Ascending aorta (tissue), 2 donors: ENCODE measurements at regions of chr22 and their contacts with region 1.

Region 1: DNA sequence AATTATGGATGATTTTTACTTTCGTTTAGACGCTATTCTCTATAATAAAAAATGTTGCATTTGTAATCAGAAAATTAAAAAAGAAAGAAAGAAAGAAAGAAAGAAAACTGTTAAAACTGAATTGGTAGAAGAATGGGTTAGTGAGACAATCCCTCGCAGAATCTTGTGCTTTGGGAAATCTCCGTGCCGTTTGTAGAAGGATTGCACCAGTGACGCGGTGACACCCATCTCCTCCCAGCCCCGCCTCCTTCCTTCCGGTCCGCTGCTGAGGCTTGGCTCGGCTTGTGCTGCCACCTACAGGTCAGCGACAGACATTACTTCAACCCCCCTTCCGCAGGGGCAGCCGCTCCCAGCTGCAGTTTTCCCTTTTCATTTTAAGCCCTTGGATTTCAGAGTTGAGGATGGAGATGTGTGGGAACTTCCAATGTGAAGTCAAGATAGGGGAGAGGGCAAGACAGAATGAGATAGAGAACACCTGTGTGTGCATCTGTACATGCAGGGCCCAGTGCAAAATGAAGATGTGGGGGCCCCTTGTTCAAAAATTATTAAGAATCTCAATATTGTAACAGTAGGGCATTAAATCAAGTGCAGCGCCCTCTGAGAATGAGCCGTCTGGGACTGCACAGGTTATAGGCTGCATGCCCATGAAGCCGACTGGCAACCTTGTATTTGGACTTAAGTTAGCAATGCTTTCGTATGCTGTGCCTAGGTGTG is 41.1 kb downstream of the TST start:
- DNase-seq: peak; percentile 48 to 93
- H3K4me3 ChIP-seq: peak overlapping the region; percentile 52 to 64
- H3K27ac ChIP-seq: no peak overlapping the region
- H3K4me1 ChIP-seq: no peaks in the 10 kb centered on the region
- H3K27me3 ChIP-seq: no peaks in the 10 kb centered on the region
- CTCF ChIP-seq: peak; percentile 92 to 94 (median 94)

Region 2: DNA sequence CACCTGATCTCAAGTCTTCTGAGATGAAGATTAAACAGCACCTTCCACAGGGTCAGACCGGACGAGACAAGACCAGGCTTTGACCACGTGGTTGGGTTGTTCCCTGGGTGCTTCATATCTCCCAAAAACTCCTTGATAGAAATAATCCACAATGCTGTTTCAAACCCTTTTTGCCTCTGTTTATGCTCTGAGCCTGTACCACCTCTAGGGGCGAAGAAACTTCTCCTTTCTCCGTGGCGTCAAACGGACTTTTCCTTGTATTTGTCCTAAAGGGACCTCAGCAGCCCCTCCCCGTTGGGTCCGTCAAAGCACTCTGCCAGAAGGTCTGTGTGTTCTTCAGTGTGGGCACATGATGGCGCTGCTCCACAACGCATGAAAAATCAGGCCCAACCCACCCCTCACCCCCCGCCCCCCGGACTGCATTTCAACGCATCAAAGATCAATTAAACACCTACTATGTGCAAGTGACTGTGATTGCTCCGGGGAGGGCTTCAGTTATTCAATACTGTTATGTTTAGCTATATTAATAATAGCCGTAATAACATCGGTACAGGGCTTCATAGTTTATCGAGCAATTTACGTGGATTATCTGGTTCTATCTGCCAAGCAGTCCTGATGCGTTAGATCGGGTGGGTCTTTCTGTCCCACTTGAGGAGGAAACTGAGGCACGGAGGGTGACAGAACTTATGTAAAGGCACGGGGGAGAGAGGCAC is 431.9 kb before region 1 on chr22:
- intact Hi-C with region 1: loop called (anchors 5 kb)
- DNase-seq: no peak
- H3K4me3 ChIP-seq: no peak overlapping the region
- H3K27ac ChIP-seq: no peak overlapping the region
- H3K4me1 ChIP-seq: no peaks in the 10 kb centered on the region
- H3K27me3 ChIP-seq: no peaks in the 10 kb centered on the region
- CTCF ChIP-seq: peak in 1 of 3 experiments; percentile 50

Region 3: GRCh38 chr22:36781656-36782627 is 196.2 kb before region 1 on chr22:
- intact Hi-C with region 1: loop called (anchors 1 kb)
- DNase-seq: peak; percentile 39 to 90
- H3K4me3 ChIP-seq: no peak overlapping the region
- H3K27ac ChIP-seq: no peak overlapping the region
- H3K4me1 ChIP-seq: no peaks in the 10 kb centered on the region
- H3K27me3 ChIP-seq: no peaks in the 10 kb centered on the region
- CTCF ChIP-seq: peak; percentile 84 to 92 (median 87)

Region 4: DNA sequence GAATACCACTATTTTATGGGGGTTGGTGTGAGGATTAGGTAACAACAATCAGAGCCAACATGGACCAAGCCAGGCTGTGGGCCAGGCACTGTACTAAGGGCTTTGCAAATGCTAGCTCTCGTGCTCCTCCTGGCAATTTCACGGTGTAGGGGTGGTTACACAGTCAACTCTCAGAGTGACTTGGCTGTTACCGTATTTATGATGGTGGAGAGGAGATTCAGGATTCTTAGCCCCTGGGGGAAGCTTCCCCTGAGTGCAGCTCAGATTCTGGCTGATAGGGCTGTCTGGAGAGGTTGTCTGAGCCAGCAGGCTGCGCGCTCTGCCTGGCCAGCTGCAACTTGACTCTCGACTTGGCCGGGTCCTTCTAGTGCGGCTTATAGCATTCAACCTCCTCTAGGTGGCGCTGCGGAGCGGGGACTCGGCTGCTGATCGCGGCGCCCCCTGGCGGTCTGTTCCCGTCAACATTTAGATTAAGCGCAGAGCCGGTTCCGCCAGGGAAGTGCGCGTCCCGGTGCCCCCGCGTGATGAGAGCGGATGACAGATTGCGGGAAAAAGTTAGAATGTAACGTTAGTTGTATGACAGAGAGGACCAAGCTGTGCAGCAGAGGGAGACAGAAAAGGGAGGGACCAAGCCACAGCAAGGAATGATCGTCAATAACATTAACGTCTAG is 121.8 kb before region 1 on chr22:
- intact Hi-C with region 1: loop called (anchors 2 kb)
- DNase-seq: peak; percentile 37 to 90
- H3K4me3 ChIP-seq: no peak overlapping the region
- H3K27ac ChIP-seq: no peak overlapping the region
- H3K4me1 ChIP-seq: peaks cover 0 to 4% of the 10 kb centered on the region in 2 donors
- H3K27me3 ChIP-seq: no peaks in the 10 kb centered on the region
- CTCF ChIP-seq: peak; percentile 99 to 100 (median 99)

Region 5: GRCh38 chr22:37019309-37020125 is 41.4 kb after region 1 on chr22 and contains the starts of genes MPST and TST:
- intact Hi-C with region 1: loop called (anchors 1 kb)
- DNase-seq: peak; percentile 13 to 81
- H3K4me3 ChIP-seq: peak within 1 kb of the TSS; percentile 88 to 98
- H3K27ac ChIP-seq: peak within 1 kb of the TSS; percentile 88 to 95
- H3K4me1 ChIP-seq: peaks cover 11 to 41% of the 10 kb centered on the region in 2 donors
- H3K27me3 ChIP-seq: no peaks in the 10 kb centered on the region
- CTCF ChIP-seq: peak in 2 of 3 experiments; percentile 11 to 73
- total RNA-seq, gene MPST: 113 TPM
- total RNA-seq, gene TST: 22.7 TPM

Region 6: GRCh38 chr22:37199103-37199759 is 221.1 kb after region 1 on chr22:
- intact Hi-C with region 1: loop called (anchors 2 kb)
- DNase-seq: peak; percentile 89 to 99
- H3K4me3 ChIP-seq: peak overlapping the region; percentile 70 to 78
- H3K27ac ChIP-seq: peak overlapping the region; percentile 88 to 92
- H3K4me1 ChIP-seq: peaks cover 15 to 26% of the 10 kb centered on the region in 2 donors
- H3K27me3 ChIP-seq: no peaks in the 10 kb centered on the region
- CTCF ChIP-seq: peak; percentile 90 to 96 (median 93)